ENCODE measurements at regions of chr11 and their contacts with region 1.

Region 1: DNA sequence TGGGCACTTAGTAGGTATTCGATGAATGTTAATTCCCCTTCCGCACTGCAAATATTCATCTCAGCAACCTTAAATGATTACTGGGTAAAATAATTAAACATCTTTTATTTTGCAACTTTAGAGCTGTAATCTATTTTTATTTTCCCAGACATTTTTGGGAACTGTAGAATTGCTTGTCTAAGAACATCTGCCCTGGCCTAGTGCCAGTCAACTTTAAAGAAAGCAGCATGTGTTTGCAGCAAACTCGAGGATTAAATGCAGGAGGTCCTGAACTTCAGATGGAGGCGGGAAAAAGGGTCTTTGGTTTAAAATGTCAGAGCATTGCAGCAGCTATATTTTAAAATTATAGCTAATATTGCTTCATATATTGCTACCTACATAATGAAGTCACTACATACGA is 190.0 kb downstream of the PGR start:
- DNase-seq: peak in 1 of 2 donors; percentile 76
- H3K4me3 ChIP-seq: no peak overlapping the region
- H3K27ac ChIP-seq: no peak overlapping the region
- H3K4me1 ChIP-seq: peaks cover 0 to 10% (median 3%) of the 10 kb centered on the region in 4 donors
- H3K27me3 ChIP-seq: no peaks in the 10 kb centered on the region
- CTCF ChIP-seq: no peak
- EP300 ChIP-seq: no peak
- POLR2A ChIP-seq: no peak

Region 2: DNA sequence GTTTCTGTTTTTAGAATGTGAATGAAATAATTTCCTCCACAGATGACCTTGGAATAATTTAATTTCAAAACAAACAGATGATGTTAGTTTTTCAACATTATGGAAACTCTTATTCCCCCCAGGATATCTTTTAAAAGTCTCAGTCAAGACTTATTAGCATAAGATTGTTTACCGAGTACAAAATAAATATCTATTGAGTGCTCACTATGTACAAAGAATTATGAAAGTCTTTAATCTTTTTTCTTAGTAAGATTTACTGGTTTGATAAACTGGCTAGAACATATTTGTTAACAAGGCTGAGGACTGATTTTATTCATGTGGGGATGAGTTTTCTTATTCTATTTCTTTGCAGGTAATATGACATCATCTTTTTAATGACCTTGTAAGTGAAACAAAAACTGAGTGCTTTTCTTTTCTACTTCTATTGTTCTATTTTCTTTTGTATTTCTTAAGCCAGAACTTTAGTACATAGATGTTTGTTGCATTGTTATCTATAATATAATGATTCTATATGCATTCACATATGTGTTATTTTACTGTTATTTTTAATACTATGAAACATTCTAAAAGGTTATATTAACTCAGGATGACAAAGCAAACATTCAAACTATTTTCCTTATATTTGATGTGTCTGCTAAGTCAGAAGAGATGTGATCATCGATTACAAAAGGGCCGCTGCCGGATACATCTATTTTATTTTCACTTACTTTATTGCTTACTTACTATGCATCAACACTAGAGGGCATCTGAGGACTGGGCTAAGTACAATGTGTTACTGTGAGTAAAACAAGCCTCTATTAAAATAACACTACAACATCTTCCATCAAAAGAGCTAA is 363.5 kb before region 1 on chr11:
- intact Hi-C with region 1: loop called (anchors 5 kb)
- DNase-seq: peak in 1 of 2 donors; percentile 83
- H3K4me3 ChIP-seq: no peak overlapping the region
- H3K27ac ChIP-seq: no peak overlapping the region
- H3K4me1 ChIP-seq: peaks cover 0 to 6% (median 3%) of the 10 kb centered on the region in 4 donors
- H3K27me3 ChIP-seq: no peaks in the 10 kb centered on the region
- CTCF ChIP-seq: peak in 5 of 7 experiments; percentile 46 to 76 (median 68)
- EP300 ChIP-seq: no peak
- POLR2A ChIP-seq: no peak

Region 3: GRCh38 chr11:101115671-101116160 is 176.1 kb after region 1 on chr11:
- intact Hi-C with region 1: no loop called
- DNase-seq: no peak
- H3K4me3 ChIP-seq: no peak overlapping the region
- H3K27ac ChIP-seq: no peak overlapping the region
- H3K4me1 ChIP-seq: no peaks in the 10 kb centered on the region
- H3K27me3 ChIP-seq: no peaks in the 10 kb centered on the region
- CTCF ChIP-seq: no peak
- EP300 ChIP-seq: no peak
- POLR2A ChIP-seq: no peak

Measured in stomach (tissue), 19 donors.